ENCODE measurements at regions of chr10 and their contacts with region 1.

Region 1: GRCh38 chr10:102503281-102504220 is at the start of gene SUFU:
- DNase-seq: peak; percentile 96 to 100 (median 98)
- ATAC-seq: peak; percentile 68 to 69
- H3K4me3 Mint-ChIP-seq: no peak within 1 kb of the TSS
- H3K27ac Mint-ChIP-seq: peak within 1 kb of the TSS in 8 of 10 donors; percentile 63 to 94 (median 88)
- H3K4me1 Mint-ChIP-seq: peaks cover 22 to 42% (median 35%) of the 10 kb centered on the region in 4 donors
- H3K27me3 Mint-ChIP-seq: no peaks in the 10 kb centered on the region
- polyA plus RNA-seq, gene SUFU: 2.3 to 7.4 (median 3.0) TPM

Region 2: DNA sequence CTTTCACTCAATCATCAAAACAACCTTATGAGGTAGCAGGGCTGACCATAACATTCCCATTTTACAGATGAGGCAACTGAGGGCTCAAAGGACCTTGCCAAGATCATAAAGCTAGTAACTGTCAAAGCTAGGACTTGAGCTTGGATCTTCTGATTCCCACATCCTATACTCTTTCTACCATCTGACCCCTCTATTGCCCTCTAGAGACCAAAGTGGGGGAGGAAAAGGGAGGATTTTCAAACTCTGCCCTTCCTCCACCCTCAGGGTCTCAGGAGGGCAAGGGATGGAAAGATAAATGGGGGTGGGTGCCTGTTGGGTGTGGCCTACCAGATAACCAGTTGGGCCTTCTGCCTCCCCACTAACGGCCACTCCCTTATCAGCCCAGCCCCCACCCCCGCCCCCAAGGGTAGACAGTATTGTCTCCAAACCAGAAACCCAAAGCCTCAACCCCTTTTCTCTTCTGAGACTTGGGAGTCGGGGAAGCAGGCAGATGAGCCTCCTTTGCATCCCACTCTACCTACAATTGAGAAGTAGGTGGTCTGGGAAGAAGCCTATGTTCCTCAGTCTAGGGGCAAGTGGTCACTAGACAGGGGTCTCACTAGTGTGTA is 391.2 kb before region 1 on chr10:
- POLR2A ChIA-PET with region 1: no interaction called
- DNase-seq: no peak
- ATAC-seq: no peak
- H3K4me3 Mint-ChIP-seq: peak overlapping the region in 9 of 10 donors; percentile 5 to 95 (median 88)
- H3K27ac Mint-ChIP-seq: peak overlapping the region in 8 of 10 donors; percentile 4 to 93 (median 32)
- H3K4me1 Mint-ChIP-seq: peaks cover 26 to 63% (median 52%) of the 10 kb centered on the region in 4 donors
- H3K27me3 Mint-ChIP-seq: no peaks in the 10 kb centered on the region

Region 3: DNA sequence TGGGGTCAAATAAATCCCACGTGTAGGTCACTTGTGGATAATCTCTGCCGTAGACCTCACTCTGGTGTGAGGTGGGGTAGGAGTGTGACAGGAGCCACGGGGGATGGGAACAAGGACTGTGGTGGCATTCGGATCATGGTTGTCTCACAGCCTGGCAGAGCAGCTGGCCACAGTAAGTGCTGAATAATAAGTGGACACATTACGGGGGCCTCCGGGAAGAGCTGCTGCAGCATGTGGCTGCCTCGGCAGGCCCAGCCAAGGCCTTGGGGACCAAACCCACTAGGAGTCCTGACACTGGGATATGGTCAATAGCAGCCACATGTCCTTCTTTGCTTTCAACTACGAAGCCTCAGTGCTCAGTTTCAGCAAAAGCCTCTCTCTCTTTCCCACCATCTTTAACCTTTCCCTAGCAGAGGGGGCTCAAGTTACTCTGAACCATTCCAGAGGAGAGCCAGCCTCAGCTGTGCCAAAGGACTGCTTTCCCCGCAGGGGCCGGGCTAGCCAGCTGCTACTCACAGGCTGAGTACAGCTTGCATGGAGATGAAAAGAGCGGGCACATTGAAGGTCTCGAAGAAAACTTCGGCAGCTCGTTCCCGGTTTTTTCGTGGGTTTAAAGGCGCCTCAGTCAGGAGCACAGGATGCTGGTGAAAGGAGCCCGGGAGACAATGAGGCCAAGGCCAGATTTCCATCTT is 18.3 kb before region 1 on chr10:
- POLR2A ChIA-PET with region 1: no interaction called
- DNase-seq: no peak
- ATAC-seq: no peak
- H3K4me3 Mint-ChIP-seq: no peak overlapping the region
- H3K27ac Mint-ChIP-seq: peak overlapping the region in 1 of 10 donors; percentile 69
- H3K4me1 Mint-ChIP-seq: no peaks in the 10 kb centered on the region
- H3K27me3 Mint-ChIP-seq: no peaks in the 10 kb centered on the region

Region 4: GRCh38 chr10:102583435-102584417 is 80.2 kb after region 1 on chr10:
- POLR2A ChIA-PET with region 1: interaction called, 15 read pairs
- DNase-seq: peak; percentile 61 to 90 (median 76)
- ATAC-seq: peak; percentile 96 to 99
- H3K4me3 Mint-ChIP-seq: no peak overlapping the region
- H3K27ac Mint-ChIP-seq: peak overlapping the region in 4 of 10 donors; percentile 6 to 78 (median 52)
- H3K4me1 Mint-ChIP-seq: peaks cover 4 to 7% (median 7%) of the 10 kb centered on the region in 4 donors
- H3K27me3 Mint-ChIP-seq: no peaks in the 10 kb centered on the region

Region 5: GRCh38 chr10:102629661-102630614 is 126.4 kb after region 1 on chr10:
- POLR2A ChIA-PET with region 1: no interaction called
- DNase-seq: no peak
- ATAC-seq: no peak
- H3K4me3 Mint-ChIP-seq: no peak overlapping the region
- H3K27ac Mint-ChIP-seq: peak overlapping the region in 6 of 10 donors; percentile 43 to 77 (median 54)
- H3K4me1 Mint-ChIP-seq: peaks cover 23 to 42% (median 36%) of the 10 kb centered on the region in 4 donors
- H3K27me3 Mint-ChIP-seq: no peaks in the 10 kb centered on the region

Measured in naive thymus-derived CD8-positive, alpha-beta T cell (primary cell).